ENCODE measurements at regions of chr6 and their contacts with region 1.

Region 1: DNA sequence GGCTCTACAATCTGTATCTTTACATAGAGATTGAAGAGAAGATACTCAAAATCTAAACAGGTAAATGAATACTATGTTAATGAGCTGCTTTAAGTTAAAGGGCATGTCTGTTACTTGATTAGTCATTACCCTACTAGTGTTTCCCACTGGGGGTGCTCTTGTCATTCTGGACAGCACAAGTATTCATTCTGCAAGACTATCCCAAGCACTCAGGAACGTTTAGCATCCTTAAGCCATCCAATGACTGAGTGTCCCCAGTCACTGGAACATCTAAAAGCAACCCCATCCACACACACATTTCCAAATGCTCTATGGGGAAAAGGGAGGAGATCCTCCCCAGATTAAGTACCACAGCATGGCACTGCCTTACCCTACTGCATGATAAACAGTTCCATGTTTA is 25.7 kb downstream of the EZR start:
- DNase-seq: peak in 5 of 35 experiments; percentile 20 to 64 (median 34)
- ATAC-seq: peak in 3 of 4 experiments; percentile 18 to 44 (median 41)
- H3K4me3 ChIP-seq: no peak overlapping the region
- H3K4me3 Mint-ChIP-seq: no peak overlapping the region
- H3K27ac ChIP-seq: peak overlapping the region; percentile 6
- H3K27ac Mint-ChIP-seq: peak overlapping the region in 1 of 2 donors; percentile 84
- H3K4me1 ChIP-seq: peaks cover 17 to 74% of the 10 kb centered on the region in 2 experiments
- H3K4me1 Mint-ChIP-seq: peaks cover 85 to 92% (median 88%) of the 10 kb centered on the region in 3 donors
- H3K27me3 ChIP-seq: no peaks in the 10 kb centered on the region
- H3K27me3 Mint-ChIP-seq: no peaks in the 10 kb centered on the region

Region 2: GRCh38 chr6:158775832-158776231 is 17.6 kb before region 1 on chr6:
- CTCF ChIA-PET with region 1: interaction called in 1 of 2 experiments, 10 read pairs
- POLR2A ChIA-PET with region 1: interaction called, 5 read pairs
- DNase-seq: no peak
- ATAC-seq: no peak
- H3K4me3 ChIP-seq: no peak overlapping the region
- H3K4me3 Mint-ChIP-seq: no peak overlapping the region
- H3K27ac ChIP-seq: no peak overlapping the region
- H3K27ac Mint-ChIP-seq: peak overlapping the region in 1 of 2 donors; percentile 11
- H3K4me1 ChIP-seq: peaks cover 8 to 39% of the 10 kb centered on the region in 2 experiments
- H3K4me1 Mint-ChIP-seq: peaks cover 55 to 73% (median 72%) of the 10 kb centered on the region in 3 donors
- H3K27me3 ChIP-seq: no peaks in the 10 kb centered on the region
- H3K27me3 Mint-ChIP-seq: no peaks in the 10 kb centered on the region

Region 3: DNA sequence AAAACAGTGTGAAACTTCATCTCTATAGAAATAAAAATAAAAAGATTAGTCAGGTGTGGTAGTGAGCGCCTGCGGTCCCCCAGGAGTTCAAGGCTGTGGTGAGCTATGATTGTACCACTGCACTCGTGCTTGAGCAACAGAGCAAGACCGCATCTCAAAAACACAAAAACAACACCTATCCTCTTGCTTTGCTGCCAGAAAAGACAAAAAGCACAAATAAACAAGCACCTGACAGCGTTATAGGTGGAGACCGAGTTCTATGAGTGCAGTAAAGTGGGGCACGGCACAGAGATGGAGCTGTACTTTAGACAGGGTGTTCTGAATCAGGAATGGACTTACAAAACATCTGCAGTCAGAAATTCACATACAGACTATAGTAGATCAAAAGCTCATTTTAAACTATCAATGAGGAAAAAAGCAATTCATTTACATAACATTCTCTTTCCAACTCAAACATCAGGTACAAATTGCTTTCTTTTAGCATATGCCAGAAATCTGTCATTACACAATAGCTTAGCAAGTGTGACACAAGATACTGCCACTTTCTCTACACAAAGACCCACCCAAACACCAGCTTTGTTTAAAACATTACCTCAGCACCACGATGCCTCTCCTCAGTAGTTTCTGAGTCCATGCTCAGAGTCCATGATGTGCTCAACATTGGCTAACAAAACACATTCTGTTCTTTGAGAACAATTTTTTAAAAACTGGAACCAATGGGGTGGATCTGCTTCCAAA is 15.7 kb after region 1 on chr6:
- CTCF ChIA-PET with region 1: interaction called, 4 to 12 read pairs
- POLR2A ChIA-PET with region 1: interaction called, 7 to 29 read pairs
- DNase-seq: peak in 28 of 35 experiments; percentile 17 to 75 (median 40)
- ATAC-seq: peak; percentile 36 to 82 (median 60)
- H3K4me3 ChIP-seq: no peak overlapping the region
- H3K4me3 Mint-ChIP-seq: peak overlapping the region; percentile 41 to 79 (median 58)
- H3K27ac ChIP-seq: peak overlapping the region; percentile 50
- H3K27ac Mint-ChIP-seq: peak overlapping the region; percentile 84 to 85
- H3K4me1 ChIP-seq: peaks cover 52 to 74% of the 10 kb centered on the region in 2 experiments
- H3K4me1 Mint-ChIP-seq: peaks cover 95 to 100% (median 98%) of the 10 kb centered on the region in 3 donors
- H3K27me3 ChIP-seq: no peaks in the 10 kb centered on the region
- H3K27me3 Mint-ChIP-seq: no peaks in the 10 kb centered on the region

Region 4: DNA sequence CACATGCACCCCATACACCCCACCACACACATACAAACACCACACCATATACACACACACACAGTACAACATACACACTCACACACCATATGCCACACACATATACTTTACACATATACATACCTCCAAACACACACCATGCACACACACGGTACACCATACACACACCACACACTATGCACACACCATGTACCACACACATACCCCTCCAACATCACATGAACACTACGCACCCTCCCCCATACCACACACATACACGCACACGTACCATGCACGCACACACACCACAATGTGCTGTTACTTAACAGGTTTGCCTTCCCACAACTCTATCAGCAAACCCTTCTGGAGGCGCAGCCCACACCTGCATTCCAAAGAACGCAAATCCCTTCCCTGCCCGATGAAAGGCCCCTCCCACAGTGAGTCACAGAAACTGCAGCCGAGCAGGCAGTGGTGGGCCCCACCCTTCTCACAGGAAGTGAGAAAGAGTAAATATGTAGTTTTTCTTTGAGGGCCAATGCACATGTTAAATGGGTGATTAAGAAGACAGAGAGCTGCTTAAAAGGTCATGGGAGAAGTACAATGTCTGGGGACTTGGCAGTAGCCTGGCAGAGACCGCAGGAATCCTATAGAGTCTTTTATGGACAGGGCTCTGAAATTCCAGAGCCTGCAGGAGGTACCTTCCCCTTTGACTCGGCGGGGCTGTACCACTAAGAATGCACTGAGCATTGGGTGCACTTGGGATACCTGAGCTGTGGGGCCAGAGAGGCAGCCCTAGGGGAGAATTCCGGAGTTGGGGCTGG is 59.8 kb after region 1 on chr6:
- CTCF ChIA-PET with region 1: interaction called in 1 of 2 experiments, 5 read pairs
- POLR2A ChIA-PET with region 1: interaction called, 3 to 10 read pairs
- DNase-seq: peak; percentile 70 to 92 (median 84)
- ATAC-seq: peak; percentile 78 to 85 (median 80)
- H3K4me3 ChIP-seq: peak overlapping the region; percentile 10 to 52
- H3K4me3 Mint-ChIP-seq: no peak overlapping the region
- H3K27ac ChIP-seq: peak overlapping the region; percentile 98
- H3K27ac Mint-ChIP-seq: no peak overlapping the region
- H3K4me1 ChIP-seq: peaks cover 35 to 63% of the 10 kb centered on the region in 2 experiments
- H3K4me1 Mint-ChIP-seq: peaks cover 35 to 52% (median 49%) of the 10 kb centered on the region in 3 donors
- H3K27me3 ChIP-seq: no peaks in the 10 kb centered on the region
- H3K27me3 Mint-ChIP-seq: no peaks in the 10 kb centered on the region

Region 5: DNA sequence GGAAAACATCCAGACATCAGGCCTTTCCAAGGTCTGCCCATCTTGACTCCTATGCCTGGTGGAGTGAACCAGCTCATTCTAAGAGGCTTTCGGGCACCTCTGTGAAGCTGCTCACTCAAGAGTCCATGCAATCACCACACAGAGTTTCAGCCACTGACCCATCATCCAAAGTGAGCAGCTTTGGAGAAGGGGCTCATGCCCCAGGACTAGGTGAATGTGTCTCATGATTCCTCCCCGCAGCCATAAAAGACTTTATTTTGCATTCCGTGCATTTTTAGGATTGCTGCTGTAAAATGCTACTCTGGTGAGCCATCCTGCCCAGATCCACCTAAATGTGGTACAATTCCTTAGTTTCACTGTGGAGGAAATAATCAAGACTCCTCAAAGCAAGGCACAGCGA is 70.2 kb after region 1 on chr6:
- CTCF ChIA-PET with region 1: interaction called in 1 of 2 experiments, 11 read pairs
- POLR2A ChIA-PET with region 1: interaction called, 3 to 11 read pairs
- DNase-seq: no peak
- ATAC-seq: no peak
- H3K4me3 ChIP-seq: no peak overlapping the region
- H3K4me3 Mint-ChIP-seq: no peak overlapping the region
- H3K27ac ChIP-seq: no peak overlapping the region
- H3K27ac Mint-ChIP-seq: no peak overlapping the region
- H3K4me1 ChIP-seq: peaks cover 0 to 8% of the 10 kb centered on the region in 2 experiments
- H3K4me1 Mint-ChIP-seq: peaks cover 7 to 15% (median 7%) of the 10 kb centered on the region in 3 donors
- H3K27me3 ChIP-seq: no peaks in the 10 kb centered on the region
- H3K27me3 Mint-ChIP-seq: no peaks in the 10 kb centered on the region

Region 6: GRCh38 chr6:158958504-158959386 is 165.3 kb after region 1 on chr6:
- CTCF ChIA-PET with region 1: interaction called in 1 of 2 experiments, 3 read pairs
- POLR2A ChIA-PET with region 1: interaction called in 1 of 2 experiments, 11 read pairs
- DNase-seq: peak in 17 of 35 experiments; percentile 5 to 42 (median 19)
- ATAC-seq: peak; percentile 50 to 70 (median 60)
- H3K4me3 ChIP-seq: no peak overlapping the region
- H3K4me3 Mint-ChIP-seq: no peak overlapping the region
- H3K27ac ChIP-seq: no peak overlapping the region
- H3K27ac Mint-ChIP-seq: peak overlapping the region in 1 of 2 donors; percentile 6
- H3K4me1 ChIP-seq: no peaks in the 10 kb centered on the region
- H3K4me1 Mint-ChIP-seq: peaks cover 0 to 19% (median 14%) of the 10 kb centered on the region in 3 donors
- H3K27me3 ChIP-seq: no peaks in the 10 kb centered on the region
- H3K27me3 Mint-ChIP-seq: no peaks in the 10 kb centered on the region

Region 7: GRCh38 chr6:158972241-158973233 is 179.1 kb after region 1 on chr6:
- CTCF ChIA-PET with region 1: interaction called, 6 to 16 read pairs
- POLR2A ChIA-PET with region 1: no interaction called
- DNase-seq: peak in 2 of 35 experiments; percentile 7 to 78
- ATAC-seq: peak; percentile 43 to 70 (median 63)
- H3K4me3 ChIP-seq: no peak overlapping the region
- H3K4me3 Mint-ChIP-seq: no peak overlapping the region
- H3K27ac ChIP-seq: no peak overlapping the region
- H3K27ac Mint-ChIP-seq: no peak overlapping the region
- H3K4me1 ChIP-seq: no peaks in the 10 kb centered on the region
- H3K4me1 Mint-ChIP-seq: peaks cover 0 to 2% (median 0%) of the 10 kb centered on the region in 3 donors
- H3K27me3 ChIP-seq: no peaks in the 10 kb centered on the region
- H3K27me3 Mint-ChIP-seq: no peaks in the 10 kb centered on the region

Measured in T-cell (primary cell).